CD8-positive, alpha-beta memory T cell (primary cell): ENCODE measurements at regions of chr11 and their contacts with region 1.

Region 1: DNA sequence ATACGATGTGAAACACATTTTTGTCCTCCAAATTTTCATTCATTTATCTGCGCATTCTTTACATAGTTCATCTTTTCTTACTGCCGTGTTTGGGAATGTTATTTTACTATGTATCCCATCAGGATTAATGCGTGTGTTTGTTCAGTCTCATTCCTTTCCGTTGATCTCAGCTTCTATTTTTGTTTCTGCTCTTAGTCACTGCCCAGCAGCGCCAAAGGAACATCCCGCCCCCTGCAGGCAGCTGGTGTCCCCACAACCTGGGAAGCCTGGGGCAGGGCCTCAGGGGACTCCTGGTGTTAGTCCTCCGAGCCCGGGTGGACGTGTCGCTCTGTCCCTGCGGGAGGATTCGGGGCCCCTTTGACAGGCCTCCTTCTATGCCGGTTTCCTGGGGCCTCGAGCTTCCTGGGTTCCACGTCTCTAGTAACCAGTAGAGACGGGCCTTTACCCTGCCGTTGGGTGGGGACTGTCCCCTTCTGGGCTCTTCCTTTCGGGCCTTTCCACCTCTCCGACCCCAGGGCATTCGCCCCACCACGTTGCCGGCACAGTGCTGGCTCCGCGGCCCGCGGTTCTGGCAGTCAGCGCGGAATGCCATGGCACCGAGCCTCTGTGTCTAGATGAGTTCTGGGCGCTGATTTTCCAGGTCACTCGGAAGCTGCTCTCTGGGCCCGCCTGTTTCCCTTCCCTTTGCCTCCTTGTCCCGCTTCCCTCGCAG is 39.8 kb downstream of the WEE1 start:
- DNase-seq: peak; percentile 74 to 89 (median 78)
- H3K4me3 ChIP-seq: peak overlapping the region; percentile 79
- H3K4me3 Mint-ChIP-seq: peak overlapping the region; percentile 87 to 98 (median 94)
- H3K27ac ChIP-seq: peak overlapping the region; percentile 88
- H3K27ac Mint-ChIP-seq: peak overlapping the region; percentile 90 to 100 (median 98)
- H3K4me1 ChIP-seq: peaks cover 15% of the 10 kb centered on the region
- H3K4me1 Mint-ChIP-seq: peaks cover 16 to 20% (median 17%) of the 10 kb centered on the region in 3 donors
- H3K27me3 ChIP-seq: no peaks in the 10 kb centered on the region
- H3K27me3 Mint-ChIP-seq: peaks cover 0 to 3% of the 10 kb centered on the region in 2 donors

Region 2: DNA sequence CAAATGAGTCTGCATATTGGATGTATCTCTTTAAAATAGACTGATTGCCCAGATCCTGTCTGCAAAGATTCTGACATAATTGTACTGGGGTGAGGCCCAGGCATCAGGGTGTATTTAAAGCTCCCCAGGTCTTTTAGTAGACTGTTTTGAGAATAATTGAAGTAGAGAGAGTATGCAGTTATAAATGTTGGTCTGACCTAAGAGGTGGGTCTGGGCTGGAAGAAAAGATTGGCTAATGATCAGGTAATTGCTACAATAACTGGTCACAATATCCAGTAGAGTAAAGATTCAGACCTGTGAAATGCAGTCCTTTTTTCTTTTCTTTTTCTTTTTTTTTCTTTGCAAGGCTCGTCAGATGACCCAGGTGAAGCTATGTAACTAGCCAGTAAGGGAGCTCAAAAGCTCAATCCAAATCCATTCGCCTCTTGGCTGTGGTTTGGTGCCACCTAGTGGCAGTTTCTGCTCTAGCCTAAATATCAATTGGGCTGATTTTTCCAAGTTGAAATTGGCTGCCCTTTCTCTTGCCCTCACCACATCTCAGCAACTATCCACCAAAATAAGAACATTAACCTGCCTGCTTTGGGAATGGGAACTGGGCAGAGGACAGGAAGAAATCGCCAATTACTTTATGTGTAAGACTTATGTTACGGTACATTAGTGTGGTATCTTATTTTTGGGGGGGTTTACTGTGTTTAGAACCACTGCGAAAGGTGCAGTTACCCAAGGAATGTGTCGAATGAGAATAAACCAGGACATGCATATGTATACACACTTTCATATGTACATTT is 106.6 kb before region 1 on chr11:
- CTCF ChIA-PET with region 1: interaction called, 18 read pairs
- POLR2A ChIA-PET with region 1: interaction called, 3 read pairs
- DNase-seq: peak; percentile 52 to 82 (median 64)
- H3K4me3 ChIP-seq: no peak overlapping the region
- H3K4me3 Mint-ChIP-seq: no peak overlapping the region
- H3K27ac ChIP-seq: no peak overlapping the region
- H3K27ac Mint-ChIP-seq: peak overlapping the region in 3 of 8 donors; percentile 13 to 66 (median 43)
- H3K4me1 ChIP-seq: no peaks in the 10 kb centered on the region
- H3K4me1 Mint-ChIP-seq: peaks cover 11 to 19% (median 16%) of the 10 kb centered on the region in 3 donors
- H3K27me3 ChIP-seq: no peaks in the 10 kb centered on the region
- H3K27me3 Mint-ChIP-seq: no peaks in the 10 kb centered on the region

Region 3: DNA sequence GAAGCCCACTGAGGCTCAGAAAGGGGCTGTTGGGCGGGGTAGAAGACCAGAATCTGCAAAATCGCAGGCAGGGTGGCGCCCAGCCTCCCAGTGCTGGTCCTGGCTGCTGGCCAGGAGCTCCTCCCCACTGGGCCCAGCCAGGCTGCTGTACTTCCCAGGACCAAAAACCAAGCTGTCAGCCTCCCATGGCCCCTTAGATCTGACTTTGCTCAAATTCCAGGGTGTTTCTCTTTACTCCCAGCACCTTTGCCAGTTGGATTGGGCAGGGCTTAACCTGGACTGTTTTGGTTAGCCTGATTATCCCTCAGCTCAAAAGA is 84.0 kb before region 1 on chr11:
- CTCF ChIA-PET with region 1: interaction called, 95 read pairs
- POLR2A ChIA-PET with region 1: interaction called, 11 read pairs
- DNase-seq: no peak
- H3K4me3 ChIP-seq: no peak overlapping the region
- H3K4me3 Mint-ChIP-seq: no peak overlapping the region
- H3K27ac ChIP-seq: no peak overlapping the region
- H3K27ac Mint-ChIP-seq: no peak overlapping the region
- H3K4me1 ChIP-seq: no peaks in the 10 kb centered on the region
- H3K4me1 Mint-ChIP-seq: no peaks in the 10 kb centered on the region
- H3K27me3 ChIP-seq: no peaks in the 10 kb centered on the region
- H3K27me3 Mint-ChIP-seq: no peaks in the 10 kb centered on the region

Region 4: DNA sequence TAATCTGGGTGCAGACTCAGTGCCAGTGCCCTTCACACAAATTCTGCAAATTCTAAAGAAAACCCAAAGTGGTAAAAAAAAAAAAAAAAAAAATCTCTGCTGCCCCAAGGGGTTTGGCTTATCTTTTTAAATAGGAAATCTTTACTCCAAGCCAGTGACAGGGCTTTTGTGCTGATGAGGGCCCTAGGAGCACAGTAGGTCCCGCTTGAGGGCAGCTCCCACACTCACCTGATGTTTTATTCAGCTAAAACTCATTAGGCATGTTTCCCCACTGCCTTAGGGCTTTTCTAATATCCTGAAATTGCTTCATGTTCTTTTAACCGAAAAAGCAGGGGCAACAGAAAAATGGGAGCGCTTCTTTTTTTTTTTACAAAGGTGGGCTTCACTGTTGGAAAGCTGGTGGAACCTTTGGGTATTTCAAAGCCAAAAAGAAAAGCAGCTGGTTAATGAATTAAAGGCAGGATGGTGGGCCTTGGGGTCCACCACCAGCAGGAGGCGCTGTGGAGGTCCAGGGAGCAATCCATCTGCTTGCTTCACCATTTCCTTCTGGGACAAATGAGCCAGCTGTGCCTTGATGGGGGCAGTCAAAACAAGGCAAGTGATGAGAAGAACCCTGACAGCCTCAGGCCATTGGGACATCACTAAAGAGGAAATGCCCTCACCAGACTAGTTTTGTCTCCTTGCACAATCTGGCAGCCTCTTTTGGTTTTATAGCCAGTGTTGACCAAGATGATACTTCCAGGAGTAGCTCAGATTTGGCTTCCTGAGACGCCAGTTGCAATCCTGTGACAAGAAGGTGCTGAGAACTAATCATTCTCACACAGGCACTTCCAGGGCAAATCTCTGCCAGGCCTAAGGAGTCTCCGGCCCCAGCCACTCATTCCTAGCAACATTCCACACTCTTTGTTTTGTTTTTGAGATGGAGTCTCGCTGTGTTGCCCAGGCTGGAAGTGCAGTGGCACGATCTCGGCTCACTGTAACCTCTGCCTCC is 78.2 kb before region 1 on chr11:
- CTCF ChIA-PET with region 1: interaction called, 95 read pairs
- POLR2A ChIA-PET with region 1: interaction called, 11 read pairs
- DNase-seq: peak; percentile 58 to 83 (median 68)
- H3K4me3 ChIP-seq: no peak overlapping the region
- H3K4me3 Mint-ChIP-seq: no peak overlapping the region
- H3K27ac ChIP-seq: no peak overlapping the region
- H3K27ac Mint-ChIP-seq: peak overlapping the region in 2 of 8 donors; percentile 60 to 86
- H3K4me1 ChIP-seq: no peaks in the 10 kb centered on the region
- H3K4me1 Mint-ChIP-seq: no peaks in the 10 kb centered on the region
- H3K27me3 ChIP-seq: no peaks in the 10 kb centered on the region
- H3K27me3 Mint-ChIP-seq: no peaks in the 10 kb centered on the region

Region 5: DNA sequence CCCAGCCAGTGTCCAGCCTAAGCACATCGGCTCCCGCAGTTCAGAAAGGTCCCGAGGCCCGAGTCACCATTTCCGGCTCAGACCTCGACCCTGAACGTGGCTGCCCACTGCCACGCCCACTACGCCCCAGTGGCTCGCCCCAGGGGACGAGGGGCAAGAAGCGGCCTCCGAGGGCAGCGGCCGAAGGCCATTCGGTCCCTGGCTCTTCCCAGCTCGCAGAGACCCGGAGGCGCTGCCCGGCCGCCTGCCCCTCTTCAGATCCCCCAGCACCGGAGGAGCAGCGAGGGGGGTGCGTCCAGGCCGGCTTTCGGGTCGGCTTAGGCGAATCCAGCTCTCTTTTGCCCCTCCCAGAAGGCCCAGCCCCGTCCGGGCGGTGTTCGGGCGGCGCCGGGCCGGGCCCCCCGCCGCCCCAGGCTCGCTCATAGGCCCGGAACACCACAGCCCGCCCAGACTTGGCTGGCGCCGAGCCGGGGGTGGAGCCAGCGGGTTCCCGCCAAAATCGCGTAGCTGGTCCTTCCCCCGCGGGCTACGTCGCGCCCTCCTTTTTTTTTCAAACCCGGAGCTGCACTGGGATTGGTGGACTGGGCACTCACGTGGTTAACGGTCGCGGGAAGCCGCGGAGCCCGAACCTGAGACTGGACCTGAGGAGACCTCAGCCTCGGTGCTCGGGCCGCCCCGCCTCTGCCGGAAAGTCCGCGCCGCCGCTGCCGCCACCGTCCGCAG is 40.1 kb before region 1 on chr11 and contains the start of gene WEE1:
- CTCF ChIA-PET with region 1: interaction called, 63 read pairs
- POLR2A ChIA-PET with region 1: interaction called, 16 read pairs
- DNase-seq: peak; percentile 89 to 97 (median 94)
- H3K4me3 ChIP-seq: peak within 1 kb of the TSS; percentile 76
- H3K4me3 Mint-ChIP-seq: peak within 1 kb of the TSS; percentile 84 to 96 (median 86)
- H3K27ac ChIP-seq: peak within 1 kb of the TSS; percentile 82
- H3K27ac Mint-ChIP-seq: peak within 1 kb of the TSS; percentile 3 to 97 (median 89)
- H3K4me1 ChIP-seq: peaks cover 5% of the 10 kb centered on the region
- H3K4me1 Mint-ChIP-seq: peaks cover 32 to 45% (median 43%) of the 10 kb centered on the region in 3 donors
- H3K27me3 ChIP-seq: no peaks in the 10 kb centered on the region
- H3K27me3 Mint-ChIP-seq: no peaks in the 10 kb centered on the region
- total RNA-seq, gene WEE1: 46.9 to 49.8 TPM

Region 6: DNA sequence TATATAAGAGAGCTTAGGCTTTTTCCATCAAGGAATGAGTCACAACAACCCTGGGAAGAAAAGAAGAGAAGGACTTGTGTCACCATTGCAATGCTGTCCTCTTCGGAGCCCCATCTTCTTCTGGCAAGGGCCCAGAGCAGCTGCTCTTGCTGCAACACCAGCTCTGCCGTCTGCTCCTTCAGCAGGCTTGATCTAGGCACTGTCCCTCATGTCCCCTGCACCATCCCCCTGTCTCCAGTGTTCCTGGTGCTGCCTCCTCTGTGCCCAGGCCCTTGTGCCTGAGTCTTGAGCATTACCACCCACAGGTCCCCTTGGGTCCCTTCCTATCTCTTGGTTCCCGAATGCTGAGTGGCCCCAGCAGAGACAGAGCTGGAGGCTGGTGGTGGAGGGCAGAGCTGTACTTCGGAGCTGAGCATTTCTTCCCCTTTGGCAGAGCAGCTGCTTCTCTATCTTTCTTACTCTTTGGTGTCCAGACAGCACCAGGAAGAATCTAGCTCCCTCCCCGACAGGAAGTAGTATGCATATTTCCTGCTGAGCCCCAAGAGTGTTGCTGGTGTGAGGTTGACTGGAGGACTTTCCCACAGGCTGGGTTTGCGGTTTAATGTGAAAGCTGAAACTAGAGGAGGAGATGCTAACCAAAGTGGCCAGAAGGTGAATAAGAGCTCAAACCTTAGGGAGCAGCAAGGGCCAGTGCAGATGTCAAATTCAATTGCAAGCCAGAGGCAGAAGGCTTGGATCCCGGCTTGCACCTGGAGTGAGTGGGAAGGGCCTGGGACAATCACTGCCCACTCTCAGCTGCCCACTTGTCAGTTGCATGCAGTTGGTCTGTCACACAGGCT is 12.0 kb before region 1 on chr11:
- CTCF ChIA-PET with region 1: interaction called, 44 read pairs
- POLR2A ChIA-PET with region 1: interaction called, 5 read pairs
- DNase-seq: peak; percentile 19 to 66 (median 52)
- H3K4me3 ChIP-seq: peak overlapping the region; percentile 47
- H3K4me3 Mint-ChIP-seq: peak overlapping the region; percentile 4 to 93 (median 77)
- H3K27ac ChIP-seq: no peak overlapping the region
- H3K27ac Mint-ChIP-seq: peak overlapping the region; percentile 31 to 99 (median 90)
- H3K4me1 ChIP-seq: peaks cover 20% of the 10 kb centered on the region
- H3K4me1 Mint-ChIP-seq: peaks cover 22 to 24% (median 24%) of the 10 kb centered on the region in 3 donors
- H3K27me3 ChIP-seq: no peaks in the 10 kb centered on the region
- H3K27me3 Mint-ChIP-seq: no peaks in the 10 kb centered on the region

Region 7: GRCh38 chr11:9748361-9748970 is 135.2 kb after region 1 on chr11:
- CTCF ChIA-PET with region 1: interaction called, 15 read pairs
- POLR2A ChIA-PET with region 1: no interaction called
- DNase-seq: peak; percentile 16 to 66 (median 50)
- H3K4me3 ChIP-seq: no peak overlapping the region
- H3K4me3 Mint-ChIP-seq: no peak overlapping the region
- H3K27ac ChIP-seq: no peak overlapping the region
- H3K27ac Mint-ChIP-seq: no peak overlapping the region
- H3K4me1 ChIP-seq: no peaks in the 10 kb centered on the region
- H3K4me1 Mint-ChIP-seq: peaks cover 3 to 7% (median 5%) of the 10 kb centered on the region in 3 donors
- H3K27me3 ChIP-seq: no peaks in the 10 kb centered on the region
- H3K27me3 Mint-ChIP-seq: no peaks in the 10 kb centered on the region